Activated CD4-positive, alpha-beta memory T cell treated with anti-CD3 and anti-CD28 coated beads for 36 hours (primary cell): ENCODE measurements at regions of chr14 and their contacts with region 1.

Region 1: GRCh38 chr14:20530771-20531571 is 25.6 kb downstream of the RNASE10 start:
- DNase-seq: peak; percentile 82
- H3K4me3 Mint-ChIP-seq: peak overlapping the region; percentile 47
- H3K27ac Mint-ChIP-seq: no peak overlapping the region
- H3K4me1 Mint-ChIP-seq: peaks cover 8% of the 10 kb centered on the region
- H3K27me3 Mint-ChIP-seq: peaks cover 2% of the 10 kb centered on the region

Region 2: DNA sequence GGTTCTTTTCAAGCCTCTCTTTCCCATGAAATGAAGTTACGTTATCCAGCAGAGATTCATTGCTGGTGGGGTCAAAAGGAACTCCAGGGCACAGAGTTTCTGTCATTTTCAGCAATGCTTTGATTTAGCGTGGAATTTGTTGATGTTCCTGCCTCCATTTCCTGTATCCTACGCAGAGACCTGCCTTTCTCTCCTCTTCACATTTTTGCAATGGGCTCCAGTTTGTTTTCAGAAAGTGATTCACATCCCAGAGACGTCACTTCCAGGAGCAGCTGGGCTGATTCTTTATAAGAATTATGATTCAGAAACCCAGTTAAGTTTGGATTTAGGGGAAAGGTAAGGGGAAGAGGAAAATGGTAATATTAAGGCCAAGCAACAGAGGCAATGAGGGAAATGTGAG is 14.1 kb before region 1 on chr14:
- CTCF ChIA-PET with region 1: interaction called, 13 read pairs
- POLR2A ChIA-PET with region 1: no interaction called
- intact Hi-C with region 1: no loop called
- DNase-seq: no peak
- H3K4me3 Mint-ChIP-seq: no peak overlapping the region
- H3K27ac Mint-ChIP-seq: no peak overlapping the region
- H3K4me1 Mint-ChIP-seq: no peaks in the 10 kb centered on the region
- H3K27me3 Mint-ChIP-seq: no peaks in the 10 kb centered on the region

Region 3: DNA sequence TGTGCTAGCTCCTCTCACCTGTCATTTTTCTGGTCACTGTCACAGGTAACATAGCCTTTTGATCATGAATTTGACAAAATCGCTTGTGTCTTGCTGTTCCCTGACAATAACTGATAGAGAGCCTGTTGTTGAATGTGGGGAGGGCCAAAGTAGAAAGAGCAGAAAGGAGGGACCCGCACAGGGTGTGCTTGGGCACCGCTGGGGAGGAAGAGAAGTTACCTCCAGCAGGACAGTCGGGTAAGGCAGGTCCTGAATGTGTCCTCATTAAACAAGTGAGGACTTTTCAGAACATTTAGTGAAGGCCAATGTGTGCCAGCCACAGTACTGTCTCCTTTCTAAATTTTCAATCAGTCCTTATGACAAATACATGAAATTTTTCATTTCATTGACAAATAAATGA is 60.3 kb after region 1 on chr14 and contains the start of gene RNASE12:
- CTCF ChIA-PET with region 1: no interaction called
- POLR2A ChIA-PET with region 1: no interaction called
- intact Hi-C with region 1: no loop called
- DNase-seq: no peak
- H3K4me3 Mint-ChIP-seq: no peak within 1 kb of the TSS
- H3K27ac Mint-ChIP-seq: no peak within 1 kb of the TSS
- H3K4me1 Mint-ChIP-seq: no peaks in the 10 kb centered on the region
- H3K27me3 Mint-ChIP-seq: peaks cover 3% of the 10 kb centered on the region
- total RNA-seq, gene RNASE12: not detected

Region 4: DNA sequence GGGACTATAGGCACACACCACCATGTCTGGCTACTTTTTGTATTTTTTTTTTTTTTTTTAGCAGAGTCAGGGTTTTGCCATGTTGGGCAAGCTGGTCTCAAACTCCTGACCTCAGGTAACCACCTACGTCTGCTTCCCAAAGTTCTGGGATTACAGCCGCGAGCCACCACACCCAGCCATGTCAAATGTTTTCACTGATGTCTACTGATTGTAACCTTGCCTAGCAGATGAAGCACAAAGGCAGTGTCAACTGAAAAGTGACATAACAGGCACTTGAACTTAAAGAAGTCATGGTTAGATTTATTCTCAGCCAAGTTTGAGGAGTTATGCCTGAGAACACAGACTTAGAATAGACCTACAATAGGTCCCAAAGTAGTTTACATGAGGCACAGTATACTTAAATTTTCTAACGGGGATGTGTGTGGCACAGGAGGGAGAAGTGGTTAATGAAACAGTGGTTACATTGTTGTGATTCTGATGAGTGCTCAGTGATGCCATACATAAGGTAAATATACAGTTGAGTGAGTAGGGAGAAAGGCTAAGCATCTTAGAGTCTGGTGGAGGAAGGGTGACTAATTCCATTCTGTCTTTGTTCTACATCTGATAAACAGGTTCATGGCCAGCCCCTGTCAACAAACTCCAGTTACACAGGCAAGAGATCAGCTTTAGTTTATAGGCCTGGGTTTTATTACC is 140.8 kb after region 1 on chr14:
- CTCF ChIA-PET with region 1: no interaction called
- POLR2A ChIA-PET with region 1: no interaction called
- intact Hi-C with region 1: no loop called
- DNase-seq: no peak
- H3K4me3 Mint-ChIP-seq: no peak overlapping the region
- H3K27ac Mint-ChIP-seq: no peak overlapping the region
- H3K4me1 Mint-ChIP-seq: peaks cover 26% of the 10 kb centered on the region
- H3K27me3 Mint-ChIP-seq: no peaks in the 10 kb centered on the region

Region 5: DNA sequence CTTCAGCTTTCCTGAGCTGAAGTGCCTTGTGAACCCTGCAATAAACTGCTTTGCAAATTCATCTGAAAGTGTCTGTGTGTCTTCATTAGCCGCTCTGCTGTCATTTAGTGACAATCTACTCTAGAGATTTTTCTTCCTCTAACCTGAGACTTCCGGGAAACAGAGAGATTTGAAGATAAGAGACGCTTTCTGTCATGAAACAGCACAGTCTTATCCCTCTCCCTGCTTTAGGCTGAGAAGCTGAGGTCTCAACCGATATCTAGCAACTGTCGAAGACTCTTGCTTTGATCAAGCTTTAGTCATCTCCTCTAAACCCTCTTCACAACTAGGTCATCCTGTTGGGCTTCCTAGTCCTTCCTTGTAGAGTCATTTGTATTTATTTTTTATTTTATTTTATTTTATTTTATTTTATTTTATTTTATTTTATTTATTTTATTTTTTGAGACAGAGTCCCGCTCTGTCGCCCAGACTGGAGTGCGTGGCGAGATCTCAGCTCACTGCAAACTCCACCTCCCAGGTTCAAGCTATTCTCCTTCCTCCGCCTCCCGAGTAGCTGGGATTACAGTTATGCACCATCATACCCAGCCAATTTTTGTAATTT is 425.5 kb after region 1 on chr14:
- CTCF ChIA-PET with region 1: no interaction called
- POLR2A ChIA-PET with region 1: no interaction called
- intact Hi-C with region 1: no loop called
- DNase-seq: no peak
- H3K4me3 Mint-ChIP-seq: no peak overlapping the region
- H3K27ac Mint-ChIP-seq: no peak overlapping the region
- H3K4me1 Mint-ChIP-seq: peaks cover 17% of the 10 kb centered on the region
- H3K27me3 Mint-ChIP-seq: peaks cover 8% of the 10 kb centered on the region